ENCODE measurements at regions of chr17 and their contacts with region 1.

Region 1: DNA sequence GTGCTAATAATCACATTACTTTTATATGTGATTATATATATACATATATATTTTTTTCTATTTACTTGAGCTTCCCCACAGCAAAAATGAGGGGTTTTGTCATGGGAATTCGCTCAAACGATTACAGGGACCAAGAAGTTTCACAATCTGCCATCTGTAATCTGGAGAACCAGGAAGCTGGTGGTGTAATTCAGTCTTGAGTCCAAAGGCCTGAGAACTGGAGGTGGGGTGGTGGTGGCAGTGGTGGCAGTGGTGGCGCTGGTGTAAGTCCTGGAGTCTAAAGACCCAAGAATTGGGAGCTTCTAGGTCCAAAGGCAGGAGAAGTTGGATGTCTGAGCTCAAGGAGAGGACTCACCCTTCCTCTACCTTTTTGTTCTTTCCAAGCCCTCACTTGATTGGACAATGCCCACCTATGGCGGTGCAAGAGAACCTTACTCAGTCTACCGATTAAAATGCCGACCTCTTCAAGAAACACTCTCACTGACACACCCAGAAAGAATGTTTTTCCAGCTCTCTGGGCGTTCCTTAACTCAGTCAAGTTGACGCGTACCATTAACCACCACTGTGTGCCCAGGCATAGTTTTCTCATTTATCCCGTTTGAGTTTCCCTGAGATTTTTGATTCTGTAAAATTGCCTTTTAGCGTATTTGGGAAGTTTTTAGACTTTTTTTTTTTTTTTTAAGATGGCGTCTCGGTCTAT is 31.9 kb downstream of the POLR2A start:
- DNase-seq: no peak
- ATAC-seq: no peak
- H3K4me3 ChIP-seq: no peak overlapping the region
- H3K27ac ChIP-seq: no peak overlapping the region
- H3K4me1 ChIP-seq: no peaks in the 10 kb centered on the region
- H3K27me3 ChIP-seq: no peaks in the 10 kb centered on the region
- CTCF ChIP-seq: no peak

Region 2: GRCh38 chr17:7561028-7561575 is 45.0 kb after region 1 on chr17:
- intact Hi-C with region 1: loop called (anchors 2 to 5 kb)
- DNase-seq: peak; percentile 92 to 96
- ATAC-seq: peak; percentile 82 to 88 (median 84)
- H3K4me3 ChIP-seq: peak overlapping the region; percentile 96
- H3K27ac ChIP-seq: peak overlapping the region; percentile 94
- H3K4me1 ChIP-seq: peaks cover 45% of the 10 kb centered on the region
- H3K27me3 ChIP-seq: no peaks in the 10 kb centered on the region
- CTCF ChIP-seq: peak; percentile 86

Region 3: GRCh38 chr17:7589204-7589868 is 73.3 kb after region 1 on chr17:
- intact Hi-C with region 1: loop called in 1 of 2 experiments (anchors 2 kb)
- DNase-seq: peak; percentile 87 to 93
- ATAC-seq: peak; percentile 78 to 90 (median 84)
- H3K4me3 ChIP-seq: peak overlapping the region; percentile 58
- H3K27ac ChIP-seq: peak overlapping the region; percentile 69
- H3K4me1 ChIP-seq: peaks cover 40% of the 10 kb centered on the region
- H3K27me3 ChIP-seq: no peaks in the 10 kb centered on the region
- CTCF ChIP-seq: peak; percentile 87

Measured in psoas muscle (tissue), 8 donors.